ENCODE measurements at regions of chrX and their contacts with region 1.

Region 1: DNA sequence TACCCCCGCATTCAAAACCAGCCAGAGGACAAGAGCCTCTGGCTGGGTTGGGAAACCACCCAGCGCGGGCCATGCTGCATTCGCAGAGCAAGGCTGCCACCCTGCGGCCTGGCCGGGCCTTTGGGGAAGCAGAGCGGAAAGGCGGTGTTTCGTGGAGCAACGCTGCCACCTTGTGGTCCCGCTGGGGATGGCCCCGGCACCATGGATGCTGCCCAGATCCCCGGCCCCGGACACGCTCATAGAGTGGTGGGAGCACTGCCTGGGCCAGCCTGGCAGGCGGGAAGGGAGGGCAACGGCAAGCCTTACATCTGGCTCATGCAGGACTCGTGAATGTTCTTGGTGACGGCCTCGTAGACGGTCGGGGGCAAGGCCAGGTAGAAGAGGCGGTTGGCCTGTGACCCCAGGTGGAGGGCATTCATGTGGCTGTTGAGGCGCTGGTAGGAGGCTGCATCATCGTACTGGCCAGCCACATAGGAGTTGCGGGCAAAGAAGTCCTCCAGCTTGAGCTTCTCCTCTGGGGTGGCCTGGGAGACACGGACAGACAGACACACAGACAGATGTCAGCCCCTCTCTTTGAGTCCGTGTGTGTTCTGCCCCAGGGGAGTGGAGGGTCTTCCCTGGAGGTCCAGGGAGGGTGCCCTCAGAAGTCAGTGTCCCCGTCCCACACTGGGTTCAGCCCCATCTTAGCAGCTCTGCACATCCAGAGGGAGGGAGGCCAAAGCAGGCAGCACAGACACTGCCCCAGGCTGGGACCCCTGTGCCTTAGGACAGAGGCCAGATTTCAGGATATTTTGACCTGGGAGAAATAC is 11.6 kb downstream of the G6PD start:
- DNase-seq: peak; percentile 82 to 87 (median 86)
- H3K4me3 ChIP-seq: no peak overlapping the region
- H3K4me3 Mint-ChIP-seq: no peak overlapping the region
- H3K27ac ChIP-seq: peak overlapping the region in 1 of 2 donors; percentile 38
- H3K27ac Mint-ChIP-seq: peak overlapping the region in 6 of 7 donors; percentile 37 to 91 (median 72)
- H3K4me1 ChIP-seq: peaks cover 6% of the 10 kb centered on the region in 2 donors
- H3K4me1 Mint-ChIP-seq: peaks cover 2% of the 10 kb centered on the region
- H3K27me3 ChIP-seq: no peaks in the 10 kb centered on the region
- H3K27me3 Mint-ChIP-seq: peaks cover 0 to 10% (median 0%) of the 10 kb centered on the region in 3 donors
- CTCF ChIP-seq: peak; percentile 92

Region 2: DNA sequence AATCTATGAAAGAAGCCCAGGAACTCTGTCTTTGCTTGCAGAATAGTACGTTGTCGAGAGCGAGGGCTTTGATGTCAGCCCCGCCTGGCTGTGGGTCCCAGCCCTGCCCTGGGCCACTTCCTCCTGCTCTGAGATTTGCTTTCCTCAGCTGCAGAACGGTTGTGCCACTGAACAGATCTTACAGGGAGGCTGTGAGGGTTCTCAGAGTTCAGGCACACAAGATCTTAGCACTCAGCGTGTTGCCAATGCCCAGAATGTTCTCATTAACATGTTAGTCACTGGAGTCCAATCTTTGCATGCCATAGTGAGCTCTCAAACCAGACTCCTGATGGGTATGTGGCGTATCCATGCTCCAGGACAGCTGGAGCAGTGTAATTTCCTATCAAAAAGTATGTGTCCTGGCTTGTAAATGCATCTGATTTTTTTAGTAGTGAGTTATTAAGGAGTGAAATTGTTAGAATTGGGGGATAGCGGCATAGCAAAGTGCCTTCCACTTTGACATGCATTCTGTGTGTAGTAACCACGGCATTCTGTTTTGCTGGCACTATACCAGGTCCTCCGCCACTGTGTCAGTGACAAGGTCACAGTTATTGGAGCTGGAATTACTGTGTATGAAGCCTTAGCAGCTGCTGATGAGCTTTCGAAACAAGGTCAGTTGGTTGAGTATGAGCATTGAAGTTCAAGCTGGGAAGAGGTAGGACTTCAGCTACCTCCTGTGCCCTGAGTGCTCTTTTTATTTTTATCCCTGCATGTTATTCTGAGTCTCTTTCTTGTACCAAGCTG is 207.8 kb before region 1 on chrX:
- intact Hi-C with region 1: no loop called
- DNase-seq: no peak
- H3K4me3 ChIP-seq: no peak overlapping the region
- H3K4me3 Mint-ChIP-seq: peak overlapping the region; percentile 16 to 19
- H3K27ac ChIP-seq: no peak overlapping the region
- H3K27ac Mint-ChIP-seq: peak overlapping the region in 1 of 7 donors; percentile 75
- H3K4me1 ChIP-seq: peaks cover 10 to 14% of the 10 kb centered on the region in 2 donors
- H3K4me1 Mint-ChIP-seq: peaks cover 19% of the 10 kb centered on the region
- H3K27me3 ChIP-seq: peaks cover 0 to 3% of the 10 kb centered on the region in 2 donors
- H3K27me3 Mint-ChIP-seq: peaks cover 5 to 26% (median 8%) of the 10 kb centered on the region in 3 donors
- CTCF ChIP-seq: no peak

Region 3: GRCh38 chrX:154370882-154371770 is 163.9 kb before region 1 on chrX:
- intact Hi-C with region 1: loop called (anchors 2 to 5 kb)
- DNase-seq: peak; percentile 84 to 93 (median 92)
- H3K4me3 ChIP-seq: peak overlapping the region; percentile 61 to 94 (median 88)
- H3K4me3 Mint-ChIP-seq: peak overlapping the region; percentile 84 to 88
- H3K27ac ChIP-seq: peak overlapping the region; percentile 95 to 100
- H3K27ac Mint-ChIP-seq: peak overlapping the region; percentile 85 to 95 (median 89)
- H3K4me1 ChIP-seq: peaks cover 52 to 62% of the 10 kb centered on the region in 2 donors
- H3K4me1 Mint-ChIP-seq: peaks cover 21% of the 10 kb centered on the region
- H3K27me3 ChIP-seq: no peaks in the 10 kb centered on the region
- H3K27me3 Mint-ChIP-seq: peaks cover 3 to 15% (median 8%) of the 10 kb centered on the region in 3 donors
- CTCF ChIP-seq: no peak

Measured in CD14-positive monocyte (primary cell).